ENCODE measurements at regions of chr1 and their contacts with region 1.

Region 1: DNA sequence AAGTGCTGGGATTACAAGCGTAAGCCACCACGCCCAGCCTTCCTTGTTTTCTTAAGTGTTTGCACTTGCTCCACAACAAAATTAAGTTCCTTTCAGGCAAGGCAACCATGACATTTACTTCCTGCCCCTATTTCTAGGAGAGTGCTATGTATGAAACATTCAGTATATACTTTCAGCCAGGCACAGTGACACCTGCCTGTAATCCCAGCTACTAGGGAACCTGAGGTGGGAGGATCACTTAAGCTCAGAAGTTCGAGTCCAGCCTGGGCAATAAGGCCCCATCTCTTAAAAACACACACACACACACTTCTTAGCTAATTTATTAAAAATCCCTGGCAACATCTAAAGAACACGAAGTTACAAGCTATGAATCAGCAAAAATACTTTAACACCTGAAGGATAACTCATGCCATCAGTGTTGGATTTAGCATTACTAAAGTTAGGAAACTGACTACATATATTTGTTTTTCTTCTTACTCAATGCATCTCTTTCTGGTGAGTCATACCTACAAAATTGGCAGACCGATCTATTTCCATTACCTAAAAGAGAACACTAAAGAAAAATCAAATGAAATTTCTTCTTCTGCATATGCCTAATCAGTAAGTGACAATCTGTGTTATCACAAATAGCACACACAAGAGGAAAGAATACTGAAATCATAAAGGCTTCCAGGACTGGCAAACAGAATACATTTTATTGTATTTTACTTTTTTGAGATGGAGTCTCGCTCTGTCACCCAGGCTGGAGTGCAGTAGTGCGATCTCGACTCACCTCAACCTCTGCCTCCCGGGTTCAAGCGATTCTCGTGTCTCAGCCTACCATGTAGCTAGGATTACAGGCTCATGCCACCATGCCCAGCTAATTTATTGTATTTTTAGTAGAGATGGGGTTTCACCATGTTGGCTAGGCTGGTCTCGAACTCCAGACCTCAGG is 41.5 kb downstream of the RNF115 start:
- DNase-seq: no peak
- ATAC-seq: no peak
- H3K4me3 ChIP-seq: no peak overlapping the region
- H3K27ac ChIP-seq: no peak overlapping the region
- H3K4me1 ChIP-seq: peaks cover 10% of the 10 kb centered on the region
- H3K27me3 ChIP-seq: no peaks in the 10 kb centered on the region
- CTCF ChIP-seq: no peak
- EP300 ChIP-seq: no peak
- POLR2A ChIP-seq: no peak
- RAD21 ChIP-seq: no peak

Region 2: GRCh38 chr1:145708063-145708699 is 74.3 kb before region 1 on chr1:
- CTCF ChIA-PET with region 1: no interaction called
- POLR2A ChIA-PET with region 1: no interaction called
- RAD21 ChIA-PET with region 1: no interaction called
- SMC1A ChIA-PET with region 1: no interaction called
- in situ Hi-C with region 1: no loop called
- intact Hi-C with region 1: no loop called
- DNase-seq: no peak
- ATAC-seq: peak; percentile 79
- H3K4me3 ChIP-seq: no peak overlapping the region
- H3K27ac ChIP-seq: no peak overlapping the region
- H3K4me1 ChIP-seq: peaks cover 6% of the 10 kb centered on the region
- H3K27me3 ChIP-seq: no peaks in the 10 kb centered on the region
- CTCF ChIP-seq: no peak
- EP300 ChIP-seq: no peak
- POLR2A ChIP-seq: no peak
- RAD21 ChIP-seq: no peak

Region 3: DNA sequence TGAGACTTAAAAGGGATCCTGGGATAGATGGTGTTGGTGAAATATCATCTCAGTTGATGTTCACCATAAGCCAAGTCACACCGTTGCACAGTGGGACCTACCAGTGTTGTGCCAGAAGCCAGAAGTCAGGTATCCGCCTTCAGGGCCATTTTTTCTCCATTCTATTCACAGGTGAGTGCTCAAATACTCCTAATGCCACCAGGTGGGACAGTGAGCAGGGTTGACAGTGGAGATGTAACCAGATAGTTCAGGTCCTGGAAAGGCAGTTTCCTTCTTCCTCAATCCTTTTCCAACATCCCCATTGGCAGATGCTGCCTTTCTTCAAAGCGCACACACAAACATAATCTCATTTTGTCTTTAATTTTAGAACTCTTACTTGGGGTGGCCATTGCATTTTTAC is 51.5 kb before region 1 on chr1:
- CTCF ChIA-PET with region 1: no interaction called
- POLR2A ChIA-PET with region 1: no interaction called
- RAD21 ChIA-PET with region 1: no interaction called
- SMC1A ChIA-PET with region 1: no interaction called
- in situ Hi-C with region 1: loop called (anchors 5 kb)
- intact Hi-C with region 1: no loop called
- DNase-seq: no peak
- ATAC-seq: no peak
- H3K4me3 ChIP-seq: no peak overlapping the region
- H3K27ac ChIP-seq: no peak overlapping the region
- H3K4me1 ChIP-seq: no peaks in the 10 kb centered on the region
- H3K27me3 ChIP-seq: no peaks in the 10 kb centered on the region
- CTCF ChIP-seq: no peak
- EP300 ChIP-seq: no peak
- POLR2A ChIP-seq: no peak
- RAD21 ChIP-seq: no peak

Region 4: DNA sequence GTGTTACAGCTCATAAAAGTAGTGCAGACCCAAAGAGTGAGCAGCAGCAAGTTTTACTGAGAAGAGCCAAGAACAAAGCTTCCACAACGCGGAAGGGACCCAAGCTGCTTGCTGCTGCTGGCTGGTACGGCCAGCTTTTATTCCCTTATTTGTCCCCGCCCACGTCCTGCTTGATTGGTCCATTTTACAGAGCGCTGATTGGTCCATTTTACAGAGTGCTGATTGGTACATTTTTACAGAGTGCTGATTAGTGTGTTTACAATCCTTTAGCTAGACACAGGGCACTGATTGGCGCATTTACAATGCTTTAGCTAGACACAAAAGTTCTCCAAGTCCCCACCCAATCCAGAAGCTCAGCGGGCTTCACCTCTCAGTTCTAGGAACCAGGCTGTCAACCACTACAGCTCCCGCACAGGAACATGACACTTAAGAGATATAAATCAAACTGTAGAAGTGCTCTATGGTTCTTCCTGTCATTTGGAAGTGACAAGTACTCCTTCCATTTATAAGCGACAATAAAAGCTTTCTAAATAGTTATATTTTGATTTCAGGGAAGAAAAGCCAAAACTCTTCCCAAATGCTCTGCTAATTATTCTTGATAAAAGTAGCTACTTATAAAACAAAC is 12.9 kb after region 1 on chr1:
- CTCF ChIA-PET with region 1: interaction called, 4 read pairs
- POLR2A ChIA-PET with region 1: no interaction called
- RAD21 ChIA-PET with region 1: no interaction called
- SMC1A ChIA-PET with region 1: interaction called, 10 read pairs
- in situ Hi-C with region 1: no loop called
- intact Hi-C with region 1: no loop called
- DNase-seq: no peak
- ATAC-seq: no peak
- H3K4me3 ChIP-seq: no peak overlapping the region
- H3K27ac ChIP-seq: no peak overlapping the region
- H3K4me1 ChIP-seq: peaks cover 4% of the 10 kb centered on the region
- H3K27me3 ChIP-seq: no peaks in the 10 kb centered on the region
- CTCF ChIP-seq: no peak
- EP300 ChIP-seq: no peak
- POLR2A ChIP-seq: no peak
- RAD21 ChIP-seq: no peak

Measured in GM12878 (cell line).